ENCODE measurements at regions of chr4 and their contacts with region 1.

Region 1: GRCh38 chr4:73019462-73020047 is 50.0 kb downstream of the COX18 start:
- DNase-seq: no peak
- H3K4me3 ChIP-seq: no peak overlapping the region
- H3K27ac ChIP-seq: no peak overlapping the region
- H3K27me3 ChIP-seq: no peaks in the 10 kb centered on the region
- CTCF ChIP-seq: peak; percentile 74 to 98 (median 87)

Region 2: GRCh38 chr4:72312032-72312650 is 707.4 kb before region 1 on chr4:
- intact Hi-C with region 1: loop called in 1 of 2 experiments (anchors 10 kb)
- DNase-seq: peak in 8 of 10 donors; percentile 6 to 67 (median 56)
- H3K4me3 ChIP-seq: peak overlapping the region in 3 of 59 donors; percentile 2 to 7 (median 4)
- H3K27ac ChIP-seq: peak overlapping the region in 2 of 59 donors; percentile 11 to 17
- H3K27me3 ChIP-seq: no peaks in the 10 kb centered on the region
- CTCF ChIP-seq: no peak

Region 3: GRCh38 chr4:72505314-72505744 is 514.2 kb before region 1 on chr4:
- intact Hi-C with region 1: loop called (anchors 10 kb)
- DNase-seq: peak in 1 of 10 donors; percentile 29
- H3K4me3 ChIP-seq: no peak overlapping the region
- H3K27ac ChIP-seq: no peak overlapping the region
- H3K27me3 ChIP-seq: peaks cover 0 to 5% (median 0%) of the 10 kb centered on the region in 45 donors
- CTCF ChIP-seq: peak in 53 of 56 donors; percentile 15 to 65 (median 47)

Region 4: DNA sequence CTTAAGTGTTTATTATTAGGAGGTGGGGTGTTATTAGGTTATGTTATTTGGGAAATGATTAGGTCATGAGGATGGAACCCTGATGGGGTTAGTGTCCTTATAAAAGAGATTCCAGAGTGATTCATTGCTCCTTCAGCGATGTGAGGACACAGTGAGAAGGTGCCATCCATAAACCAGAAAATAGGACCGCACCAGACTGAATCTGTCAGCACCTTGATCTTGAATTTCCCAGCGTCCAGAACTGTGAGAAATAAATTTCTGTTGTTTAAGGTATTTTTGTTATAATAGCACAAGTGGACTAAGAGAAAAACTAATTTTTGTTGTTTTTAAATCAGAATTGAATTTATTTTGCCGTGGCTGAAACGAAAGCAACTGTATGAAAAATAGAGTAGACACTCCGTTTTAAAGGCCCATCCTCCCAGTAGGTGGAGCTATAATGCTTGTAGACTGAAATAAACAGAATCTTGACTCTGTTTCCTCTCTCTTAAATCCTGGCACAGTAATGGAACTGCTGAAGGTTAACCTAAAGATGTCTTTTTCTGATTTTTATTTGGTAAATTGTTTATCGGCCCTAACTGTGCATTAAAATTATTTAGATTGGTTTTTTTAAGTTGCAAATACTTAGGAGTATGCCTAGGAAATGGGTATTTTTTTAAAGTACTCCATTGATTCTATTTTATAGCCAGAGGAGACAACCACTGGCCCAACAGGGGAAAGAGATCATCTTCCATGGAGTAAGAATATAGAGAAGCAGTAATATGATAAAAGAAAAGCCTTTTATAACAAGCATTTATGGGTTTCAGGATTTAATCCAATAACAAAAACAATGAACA is 317.4 kb before region 1 on chr4:
- intact Hi-C with region 1: loop called (anchors 2 to 10 kb)
- DNase-seq: peak in 1 of 10 donors; percentile 28
- H3K4me3 ChIP-seq: peak overlapping the region in 56 of 59 donors; percentile 4 to 66 (median 46)
- H3K27ac ChIP-seq: no peak overlapping the region
- H3K27me3 ChIP-seq: no peaks in the 10 kb centered on the region
- CTCF ChIP-seq: peak; percentile 37 to 86 (median 63)

Measured in dorsolateral prefrontal cortex (tissue), 120 donors.